Left cardiac atrium (tissue), 4 donors: ENCODE measurements at regions of chr15 and their contacts with region 1.

Region 1: GRCh38 chr15:101652098-101652782 is at the start of gene TM2D3:
- DNase-seq: peak; percentile 96
- ATAC-seq: peak; percentile 97
- total RNA-seq, gene TM2D3: 39.2 to 46.8 TPM

Region 2: DNA sequence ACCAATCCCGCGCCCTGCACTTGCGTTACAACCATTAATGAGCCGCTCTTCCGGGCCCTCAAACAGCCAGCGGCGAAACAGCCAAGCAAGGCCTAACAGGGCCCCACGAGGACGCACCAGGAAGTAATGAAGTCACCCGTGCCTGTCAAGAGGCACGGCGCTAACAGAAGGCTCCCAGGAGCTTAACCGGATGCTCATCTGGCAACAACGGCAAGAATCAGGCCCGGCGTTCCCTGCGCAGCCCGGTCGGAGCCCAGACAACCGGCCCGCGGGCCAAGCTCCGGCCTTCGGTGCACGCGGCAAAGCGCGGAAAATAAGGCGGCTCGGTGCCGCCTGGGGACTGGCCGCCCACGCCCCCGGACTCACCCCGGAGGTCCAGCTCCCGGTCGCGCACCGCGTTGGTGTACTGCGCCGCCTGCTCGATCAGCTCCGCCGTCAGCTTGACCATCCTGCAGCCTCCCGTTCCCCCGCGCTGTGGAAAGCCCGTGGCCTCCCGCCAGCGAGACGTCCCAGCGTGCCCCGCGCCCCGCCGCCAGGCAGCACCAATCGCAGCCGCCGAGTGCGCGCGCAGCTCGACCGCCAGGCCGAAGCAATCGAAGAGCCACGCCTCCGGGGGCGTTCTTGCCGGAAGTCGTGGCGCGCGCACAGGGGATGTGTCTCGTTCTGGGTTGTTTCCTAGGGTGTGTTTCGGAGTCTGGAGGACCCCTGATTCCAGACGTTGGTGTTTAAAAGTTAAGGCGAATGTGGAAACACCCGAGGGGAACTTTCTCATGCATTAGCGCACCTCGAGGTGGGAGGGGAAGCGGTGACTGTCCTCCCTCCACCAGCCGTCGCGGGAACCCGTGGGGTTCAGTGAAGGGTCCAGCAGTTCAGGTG is 357.3 kb before region 1 on chr15 and contains the start of gene SNRPA1:
- intact Hi-C with region 1: loop called in 1 of 2 experiments (anchors 5 kb)
- DNase-seq: peak; percentile 99
- ATAC-seq: peak; percentile 95 to 96
- total RNA-seq, gene SNRPA1: 26.7 to 36.7 TPM

Region 3: GRCh38 chr15:101381671-101382212 is 270.5 kb before region 1 on chr15:
- intact Hi-C with region 1: no loop called
- DNase-seq: no peak
- ATAC-seq: no peak